Activated CD4-positive, alpha-beta T cell treated with anti-CD3 and anti-CD28 coated beads for 36 hours (primary cell): ENCODE measurements at regions of chr7 and their contacts with region 1.

Region 1: GRCh38 chr7:139133335-139134139 is 24.0 kb upstream of the ZC3HAV1 start:
- DNase-seq: peak; percentile 93
- ATAC-seq: peak; percentile 99
- H3K4me3 Mint-ChIP-seq: peak overlapping the region; percentile 74
- H3K27ac Mint-ChIP-seq: peak overlapping the region; percentile 71
- H3K4me1 Mint-ChIP-seq: peaks cover 21% of the 10 kb centered on the region
- H3K27me3 Mint-ChIP-seq: no peaks in the 10 kb centered on the region

Region 2: DNA sequence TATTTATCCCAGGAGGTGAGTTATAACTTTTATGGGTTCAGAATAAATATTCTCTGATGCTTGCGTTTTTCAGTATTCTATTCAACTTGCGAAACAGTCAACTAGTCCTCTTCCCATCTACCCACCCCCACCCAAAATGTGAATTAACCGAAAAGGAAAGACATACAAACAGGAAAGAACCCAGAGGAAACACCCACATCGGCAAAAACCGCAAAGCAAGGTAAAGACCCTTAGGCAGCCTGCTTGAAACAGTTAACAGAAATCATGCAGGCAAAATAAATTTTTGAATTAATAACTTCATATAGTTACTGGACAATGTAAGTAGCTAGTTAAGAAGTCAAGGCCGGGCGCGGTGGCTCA is 29.5 kb before region 1 on chr7:
- CTCF ChIA-PET with region 1: interaction called, 3 read pairs
- POLR2A ChIA-PET with region 1: interaction called, 3 read pairs
- intact Hi-C with region 1: loop called (anchors 1 to 2 kb)
- DNase-seq: peak; percentile 67
- ATAC-seq: no peak
- H3K4me3 Mint-ChIP-seq: peak overlapping the region; percentile 99
- H3K27ac Mint-ChIP-seq: peak overlapping the region; percentile 93
- H3K4me1 Mint-ChIP-seq: peaks cover 40% of the 10 kb centered on the region
- H3K27me3 Mint-ChIP-seq: no peaks in the 10 kb centered on the region

Region 3: DNA sequence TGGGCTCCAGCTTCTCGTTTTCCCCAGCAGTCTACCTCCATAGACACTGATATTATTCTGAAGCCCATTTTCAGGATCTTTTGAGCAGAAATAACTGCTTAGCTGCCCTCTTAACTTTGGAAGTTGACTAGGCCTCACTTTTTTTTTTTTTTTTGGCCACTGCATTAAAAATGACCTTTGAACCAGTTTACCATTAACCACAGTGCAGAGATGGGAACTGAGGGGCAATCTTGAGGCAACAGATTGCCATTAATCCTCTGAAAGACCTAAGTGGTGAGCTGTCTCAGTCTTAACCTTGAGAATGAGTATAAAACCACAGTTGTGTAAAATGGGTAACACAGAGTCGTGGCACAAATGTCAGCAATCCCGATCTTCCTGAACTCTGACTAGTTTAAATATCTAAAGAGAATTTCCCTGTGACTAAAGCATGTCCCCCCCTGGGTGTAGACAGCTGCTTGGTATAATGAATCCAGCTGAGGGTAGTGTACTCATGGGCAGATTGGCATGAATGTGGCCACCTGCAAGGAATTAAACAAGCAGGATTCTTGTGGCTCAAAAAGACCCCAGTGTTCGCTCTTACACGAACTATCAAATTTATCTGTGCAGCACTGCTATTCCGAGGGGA is 161.5 kb after region 1 on chr7:
- CTCF ChIA-PET with region 1: no interaction called
- POLR2A ChIA-PET with region 1: no interaction called
- intact Hi-C with region 1: no loop called
- DNase-seq: no peak
- ATAC-seq: no peak
- H3K4me3 Mint-ChIP-seq: no peak overlapping the region
- H3K27ac Mint-ChIP-seq: no peak overlapping the region
- H3K4me1 Mint-ChIP-seq: no peaks in the 10 kb centered on the region
- H3K27me3 Mint-ChIP-seq: no peaks in the 10 kb centered on the region

Region 4: GRCh38 chr7:139431010-139431409 is 297.5 kb after region 1 on chr7:
- CTCF ChIA-PET with region 1: no interaction called
- POLR2A ChIA-PET with region 1: no interaction called
- intact Hi-C with region 1: no loop called
- DNase-seq: no peak
- ATAC-seq: no peak
- H3K4me3 Mint-ChIP-seq: no peak overlapping the region
- H3K27ac Mint-ChIP-seq: no peak overlapping the region
- H3K4me1 Mint-ChIP-seq: peaks cover 7% of the 10 kb centered on the region
- H3K27me3 Mint-ChIP-seq: no peaks in the 10 kb centered on the region

Region 5: DNA sequence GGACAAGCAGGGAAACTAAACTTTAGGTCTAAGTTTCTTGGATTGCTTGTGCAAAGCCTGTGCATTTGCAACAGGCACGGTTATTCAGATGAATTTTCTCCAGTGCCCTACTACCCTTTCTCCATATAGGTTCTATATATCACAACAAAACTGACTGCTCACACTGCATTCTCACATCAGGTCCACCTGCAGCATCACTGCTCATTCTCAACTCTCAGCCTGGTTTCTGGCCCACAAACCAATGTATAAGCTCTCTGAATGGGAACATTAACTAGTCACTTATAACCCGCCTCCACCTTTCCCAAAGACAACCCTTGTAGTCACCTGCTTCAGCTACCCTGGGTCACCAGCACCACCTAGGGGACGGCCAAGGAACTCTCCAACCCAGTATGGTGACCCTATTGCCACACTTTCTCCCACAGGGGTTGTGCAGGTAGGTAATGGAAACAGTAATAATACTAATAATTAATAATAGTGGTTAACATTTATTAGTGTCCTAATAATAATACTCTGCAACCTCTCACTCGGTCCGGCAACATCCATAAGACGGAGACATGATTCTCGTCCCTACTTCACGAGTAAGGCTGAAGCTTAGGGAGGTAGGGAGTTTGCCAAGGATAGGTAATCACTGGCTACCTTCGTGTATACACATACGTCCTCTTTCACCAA is 487.3 kb after region 1 on chr7:
- CTCF ChIA-PET with region 1: no interaction called
- POLR2A ChIA-PET with region 1: no interaction called
- intact Hi-C with region 1: no loop called
- DNase-seq: peak; percentile 82
- ATAC-seq: peak; percentile 89
- H3K4me3 Mint-ChIP-seq: no peak overlapping the region
- H3K27ac Mint-ChIP-seq: no peak overlapping the region
- H3K4me1 Mint-ChIP-seq: peaks cover 27% of the 10 kb centered on the region
- H3K27me3 Mint-ChIP-seq: no peaks in the 10 kb centered on the region